Calu3 (cell line): ENCODE measurements at regions of chr12 and their contacts with region 1.

Region 1: DNA sequence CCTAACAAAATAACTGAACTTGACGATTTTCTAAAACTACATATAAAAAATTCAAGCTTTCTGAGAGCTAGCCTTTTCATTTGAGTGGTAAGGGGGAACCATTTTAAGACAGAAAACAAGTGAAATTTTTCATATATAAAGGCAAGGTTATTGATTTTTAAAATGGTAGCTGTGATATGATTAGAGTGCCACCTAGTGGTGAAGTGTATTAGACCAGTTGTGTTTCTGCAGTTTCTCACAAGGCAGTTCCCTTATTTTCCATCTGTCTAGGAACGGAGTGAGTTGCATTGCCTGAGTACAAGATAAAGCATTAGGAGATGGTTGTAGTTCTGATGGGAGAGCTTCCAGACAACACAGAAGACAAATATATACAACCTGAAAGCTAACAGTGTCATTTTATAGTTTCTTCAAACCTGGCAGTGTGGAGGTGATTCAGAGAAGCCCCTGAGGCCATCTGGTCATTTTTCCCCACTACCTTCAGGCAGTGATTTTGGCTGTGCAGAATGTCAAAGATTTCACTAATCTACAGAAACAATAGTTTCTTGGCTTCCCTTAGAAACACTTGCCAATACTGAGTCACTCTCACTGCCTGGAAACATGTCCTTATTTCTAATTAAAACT is 180.8 kb downstream of the C12orf50 start:
- DNase-seq: peak; percentile 53
- H3K4me3 Mint-ChIP-seq: no peak overlapping the region
- H3K27ac Mint-ChIP-seq: no peak overlapping the region
- H3K4me1 Mint-ChIP-seq: peaks cover 8% of the 10 kb centered on the region
- H3K27me3 Mint-ChIP-seq: no peaks in the 10 kb centered on the region
- CTCF ChIP-seq: peak; percentile 83

Region 2: DNA sequence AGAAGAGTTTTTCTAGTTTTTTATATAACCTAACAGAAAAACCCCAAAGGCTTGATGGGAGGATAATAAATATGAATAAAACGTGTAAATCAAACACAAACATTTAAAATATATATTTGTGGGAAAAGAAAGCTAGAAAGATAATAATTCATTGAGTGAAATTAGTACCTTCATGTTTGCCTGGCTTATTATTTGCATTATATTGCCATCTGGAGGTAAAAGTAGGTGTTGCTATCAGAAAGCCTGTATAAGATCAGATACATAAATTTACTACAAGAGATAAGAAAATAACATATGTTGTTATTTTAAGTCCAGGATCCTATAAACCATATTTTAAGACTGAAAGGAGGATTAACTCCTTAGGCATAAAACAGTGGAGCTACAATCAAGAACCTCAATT is 1896.5 kb before region 1 on chr12:
- CTCF ChIA-PET with region 1: no interaction called
- intact Hi-C with region 1: loop called (anchors 10 kb)
- DNase-seq: no peak
- H3K4me3 Mint-ChIP-seq: no peak overlapping the region
- H3K27ac Mint-ChIP-seq: no peak overlapping the region
- H3K4me1 Mint-ChIP-seq: no peaks in the 10 kb centered on the region
- H3K27me3 Mint-ChIP-seq: no peaks in the 10 kb centered on the region
- CTCF ChIP-seq: peak; percentile 61

Region 3: DNA sequence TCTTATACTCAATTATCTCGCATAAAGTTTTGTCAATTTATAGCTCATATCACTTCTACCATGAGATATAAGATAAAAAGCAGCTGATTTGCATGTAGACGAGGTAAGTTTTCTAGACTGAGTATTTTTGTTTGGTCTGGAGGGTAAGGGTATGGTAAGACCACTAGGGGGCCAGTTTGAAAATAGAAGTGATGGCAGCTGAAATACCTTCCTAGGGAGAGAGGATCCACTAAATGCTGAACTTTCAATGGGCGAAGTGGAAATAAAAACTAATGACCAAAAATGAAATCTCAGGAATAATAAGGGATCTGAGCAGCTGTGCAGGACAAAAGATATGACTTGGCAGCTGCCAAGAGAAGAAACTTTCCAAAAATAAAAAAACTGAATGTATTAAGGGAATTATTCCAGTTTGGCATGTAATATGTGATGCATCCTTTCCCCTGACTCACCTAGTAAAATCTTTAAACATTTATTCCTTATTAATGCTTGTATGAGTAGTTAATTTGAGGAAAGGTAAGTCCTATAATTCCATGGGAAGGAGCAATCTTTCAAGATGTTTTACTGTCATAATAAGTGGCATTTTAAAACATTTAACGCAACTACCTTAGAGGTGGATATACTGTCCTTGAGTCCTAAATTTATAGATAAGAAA is 573.6 kb before region 1 on chr12:
- CTCF ChIA-PET with region 1: no interaction called
- intact Hi-C with region 1: loop called (anchors 1 kb)
- DNase-seq: peak; percentile 17
- H3K4me3 Mint-ChIP-seq: no peak overlapping the region
- H3K27ac Mint-ChIP-seq: no peak overlapping the region
- H3K4me1 Mint-ChIP-seq: no peaks in the 10 kb centered on the region
- H3K27me3 Mint-ChIP-seq: no peaks in the 10 kb centered on the region
- CTCF ChIP-seq: peak; percentile 67

Region 4: GRCh38 chr12:87439990-87440827 is 408.1 kb before region 1 on chr12:
- CTCF ChIA-PET with region 1: no interaction called
- intact Hi-C with region 1: loop called (anchors 1 kb)
- DNase-seq: peak; percentile 79
- H3K4me3 Mint-ChIP-seq: peak overlapping the region; percentile 3
- H3K27ac Mint-ChIP-seq: peak overlapping the region; percentile 90
- H3K4me1 Mint-ChIP-seq: peaks cover 60% of the 10 kb centered on the region
- H3K27me3 Mint-ChIP-seq: no peaks in the 10 kb centered on the region
- CTCF ChIP-seq: no peak

Region 5: DNA sequence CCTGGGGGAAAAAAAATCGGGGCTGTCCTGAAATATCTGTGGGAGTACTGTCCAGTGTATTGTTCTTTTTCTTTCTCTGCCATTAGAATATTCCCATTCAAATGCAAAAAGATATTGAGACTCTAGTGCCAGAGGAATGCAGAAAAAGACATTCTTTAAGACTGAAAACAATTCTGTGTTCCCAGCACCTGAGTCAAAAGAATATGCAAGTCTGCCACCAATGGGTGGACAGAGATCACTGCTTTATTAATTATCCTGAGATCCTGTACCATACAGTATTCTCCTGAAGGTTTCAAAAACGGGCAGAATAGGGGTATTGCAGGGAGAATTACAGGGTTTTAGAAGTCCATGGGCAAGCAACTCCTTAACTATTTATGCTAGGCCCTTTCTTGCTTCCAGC is 181.0 kb before region 1 on chr12:
- CTCF ChIA-PET with region 1: no interaction called
- intact Hi-C with region 1: loop called (anchors 1 kb)
- DNase-seq: peak; percentile 30
- H3K4me3 Mint-ChIP-seq: no peak overlapping the region
- H3K27ac Mint-ChIP-seq: no peak overlapping the region
- H3K4me1 Mint-ChIP-seq: peaks cover 6% of the 10 kb centered on the region
- H3K27me3 Mint-ChIP-seq: no peaks in the 10 kb centered on the region
- CTCF ChIP-seq: no peak

Region 6: GRCh38 chr12:87953256-87953860 is 105.0 kb after region 1 on chr12:
- CTCF ChIA-PET with region 1: no interaction called
- intact Hi-C with region 1: loop called (anchors 5 kb)
- DNase-seq: peak; percentile 45
- H3K4me3 Mint-ChIP-seq: no peak overlapping the region
- H3K27ac Mint-ChIP-seq: no peak overlapping the region
- H3K4me1 Mint-ChIP-seq: no peaks in the 10 kb centered on the region
- H3K27me3 Mint-ChIP-seq: no peaks in the 10 kb centered on the region
- CTCF ChIP-seq: peak; percentile 51

Region 7: DNA sequence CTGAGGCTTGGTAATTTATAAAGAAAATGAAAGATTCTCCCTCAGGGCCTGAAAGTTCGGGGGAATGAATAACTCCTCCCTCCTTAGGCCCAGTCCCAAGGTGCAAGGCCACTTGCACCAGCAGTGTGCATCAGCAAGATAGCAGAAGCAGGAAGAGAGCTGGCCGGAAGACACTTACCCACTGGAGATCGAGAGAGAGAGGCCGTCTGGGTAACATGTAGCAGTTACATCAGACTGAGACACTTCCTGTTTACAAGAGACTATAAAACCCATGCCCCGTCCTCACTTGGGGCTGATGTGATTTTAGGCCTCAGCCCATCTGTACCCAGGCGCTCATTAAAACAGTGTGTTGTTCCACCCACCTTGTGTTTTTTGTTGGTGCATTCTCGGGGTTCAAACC is 378.9 kb after region 1 on chr12:
- CTCF ChIA-PET with region 1: no interaction called
- intact Hi-C with region 1: no loop called
- DNase-seq: no peak
- H3K4me3 Mint-ChIP-seq: no peak overlapping the region
- H3K27ac Mint-ChIP-seq: no peak overlapping the region
- H3K4me1 Mint-ChIP-seq: no peaks in the 10 kb centered on the region
- H3K27me3 Mint-ChIP-seq: no peaks in the 10 kb centered on the region
- CTCF ChIP-seq: no peak